HEK293T (cell line): ENCODE measurements at regions of chr13 and their contacts with region 1.

Region 1: DNA sequence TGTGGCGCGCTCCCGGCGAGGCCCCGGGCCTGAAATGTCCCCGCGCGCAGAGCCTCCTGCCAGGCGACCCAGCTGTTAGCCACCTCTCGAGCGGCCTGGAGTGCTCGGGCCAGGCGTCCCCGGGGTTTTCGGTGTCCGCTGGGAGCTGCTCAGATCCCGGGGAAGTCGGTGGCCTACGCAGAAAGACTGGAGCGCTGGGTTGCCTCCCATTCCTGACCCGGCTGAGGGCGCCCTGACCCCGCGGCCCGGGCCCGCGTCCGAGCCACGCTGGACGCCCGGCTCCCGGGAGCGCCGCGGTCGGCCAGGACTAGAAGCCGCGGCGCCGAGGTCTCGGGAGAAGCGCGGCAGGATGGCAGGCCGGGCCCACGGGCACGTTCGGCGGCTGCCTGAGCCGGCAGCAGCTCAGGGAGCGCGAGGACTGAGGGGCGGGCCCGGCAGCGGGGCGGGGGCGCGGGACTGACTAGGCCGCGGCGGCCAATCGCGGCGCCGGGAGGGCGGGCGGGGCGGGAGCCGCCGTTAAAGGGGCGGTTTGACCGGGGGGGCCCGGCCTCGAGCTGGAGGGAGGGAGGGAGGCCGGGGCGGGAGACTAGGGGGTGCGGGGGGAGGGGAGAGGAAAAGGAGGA is 1.3 kb upstream of the ZIC2 start:
- DNase-seq: peak; percentile 62

Region 2: DNA sequence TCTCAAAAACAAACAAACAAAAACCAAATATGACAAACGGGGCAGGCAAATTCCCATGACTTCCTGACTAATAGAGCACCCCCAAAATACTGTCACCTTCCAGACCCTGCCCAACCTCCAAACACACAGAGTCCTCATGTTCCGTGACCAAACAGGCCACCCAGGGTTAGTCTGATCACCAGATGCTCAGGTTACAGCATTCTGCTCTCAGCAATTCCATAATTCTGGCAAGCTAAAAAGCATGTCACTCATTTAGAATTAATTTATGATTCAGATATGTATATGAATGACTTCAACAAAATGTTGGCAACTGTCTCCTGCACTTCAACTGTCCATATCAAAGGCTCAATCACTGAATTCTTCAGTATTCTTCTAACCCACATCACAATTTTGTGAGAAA is 61.2 kb before region 1 on chr13:
- CTCF ChIA-PET with region 1: no interaction called
- POLR2A ChIA-PET with region 1: no interaction called
- DNase-seq: no peak

Region 3: DNA sequence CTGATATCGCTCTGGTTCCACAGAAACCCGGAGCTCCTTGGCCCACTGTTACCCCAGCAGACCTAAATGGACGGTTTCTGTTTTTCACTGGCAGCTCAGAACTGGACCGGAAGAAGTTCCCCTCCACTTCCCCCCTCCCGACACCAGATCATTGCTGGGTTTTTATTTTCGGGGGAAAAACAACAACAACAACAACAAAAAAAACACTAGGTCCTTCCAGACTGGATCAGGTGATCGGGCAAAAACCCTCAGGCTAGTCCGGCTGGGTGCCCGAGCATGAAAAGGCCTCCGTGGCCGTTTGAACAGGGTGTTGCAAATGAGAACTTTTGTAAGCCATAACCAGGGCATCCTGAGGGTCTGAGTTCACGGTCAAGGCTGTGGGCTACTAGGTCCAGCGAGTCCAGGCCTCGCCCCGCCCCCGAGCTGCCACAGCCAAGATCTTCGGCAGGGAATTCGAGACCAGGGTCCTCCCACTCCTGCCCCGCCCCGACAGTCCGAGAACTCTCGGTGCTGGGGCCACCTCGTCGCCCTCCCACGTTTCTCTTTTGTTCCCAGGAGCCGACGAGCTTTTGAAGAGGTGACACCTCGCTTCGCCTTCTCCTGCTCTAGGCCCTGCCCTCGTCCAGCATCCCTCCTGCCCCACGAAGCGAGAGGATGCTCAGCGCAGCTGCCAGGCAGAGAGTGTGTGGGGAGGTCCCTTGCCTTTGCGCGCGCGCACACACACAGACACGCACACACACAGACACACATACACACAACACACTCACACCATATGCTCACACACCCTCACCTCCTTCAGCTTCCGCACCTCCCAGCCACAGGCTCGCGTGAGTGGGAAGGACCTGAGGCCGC is 10.0 kb after region 1 on chr13:
- CTCF ChIA-PET with region 1: no interaction called
- POLR2A ChIA-PET with region 1: interaction called, 29 read pairs
- DNase-seq: no peak